A673 (cell line): ENCODE measurements at regions of chr18 and their contacts with region 1.

Region 1: DNA sequence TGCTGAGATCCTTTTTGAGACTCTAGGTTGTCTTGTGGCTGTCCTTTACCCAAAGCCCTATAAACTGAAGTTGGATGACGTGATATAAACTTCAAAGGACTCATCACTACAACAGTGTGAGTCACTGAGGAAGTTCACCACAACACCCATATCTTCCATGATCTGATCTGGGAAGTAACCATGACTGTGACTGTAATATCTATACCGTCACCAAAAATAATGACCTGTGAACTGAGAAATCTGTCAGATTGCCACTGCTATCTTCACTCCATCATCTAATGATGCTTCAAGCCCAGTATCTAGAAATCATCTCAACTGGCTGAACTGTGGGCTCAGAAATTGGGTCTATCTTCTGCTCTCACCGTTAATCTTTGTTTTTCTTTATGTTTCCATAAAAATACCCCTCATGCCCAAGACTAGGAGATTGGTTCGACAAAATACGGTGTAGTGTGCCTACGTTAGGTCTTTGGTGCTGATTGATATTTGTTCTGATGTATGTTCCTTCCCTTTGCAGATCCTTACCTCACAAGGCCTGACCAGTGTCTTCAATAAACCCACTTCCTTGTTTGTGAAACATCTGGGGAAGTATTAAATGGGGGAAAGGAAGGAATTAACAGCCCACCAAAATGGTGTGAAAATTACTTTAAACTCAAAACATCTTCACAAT is 78.2 kb downstream of the MYL12B start:
- DNase-seq: no peak
- H3K4me3 ChIP-seq: no peak overlapping the region
- H3K27ac ChIP-seq: no peak overlapping the region
- H3K4me1 ChIP-seq: peaks cover 7% of the 10 kb centered on the region
- H3K27me3 ChIP-seq: no peaks in the 10 kb centered on the region
- CTCF ChIP-seq: no peak

Region 2: DNA sequence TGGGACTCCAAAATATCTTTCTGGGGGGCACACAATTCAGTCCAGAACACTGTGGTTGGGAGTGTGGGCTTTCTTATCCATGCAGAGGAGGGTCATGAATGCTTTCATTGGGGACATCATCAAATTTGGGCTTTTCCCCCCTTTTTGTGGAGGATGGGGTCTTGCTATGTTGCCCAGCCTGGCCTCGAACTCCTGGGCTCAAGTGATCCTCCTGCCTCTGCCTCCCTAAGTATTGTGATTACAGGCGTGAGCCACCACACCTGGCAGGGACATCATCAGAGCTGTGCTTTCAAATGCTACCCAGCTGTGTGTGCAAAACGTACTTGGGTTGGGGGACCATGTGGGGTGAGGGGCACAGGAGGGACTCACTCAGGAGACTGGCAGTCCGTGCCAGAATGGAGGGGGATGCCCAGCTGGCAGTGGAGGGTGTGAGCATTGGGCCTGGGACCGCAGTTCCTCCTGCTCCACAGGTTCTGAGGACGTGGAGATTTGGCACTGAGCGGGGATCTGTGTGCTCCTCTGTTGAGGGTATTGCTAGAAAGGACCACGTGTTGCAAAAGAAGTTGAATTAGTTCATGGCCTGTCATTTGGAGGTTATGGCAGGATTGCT is 468.9 kb before region 1 on chr18:
- CTCF ChIA-PET with region 1: no interaction called
- POLR2A ChIA-PET with region 1: no interaction called
- intact Hi-C with region 1: no loop called
- DNase-seq: no peak
- H3K4me3 ChIP-seq: no peak overlapping the region
- H3K27ac ChIP-seq: no peak overlapping the region
- H3K4me1 ChIP-seq: no peaks in the 10 kb centered on the region
- H3K27me3 ChIP-seq: no peaks in the 10 kb centered on the region
- CTCF ChIP-seq: no peak

Region 3: GRCh38 chr18:3230401-3231334 is 109.5 kb before region 1 on chr18:
- CTCF ChIA-PET with region 1: no interaction called
- POLR2A ChIA-PET with region 1: no interaction called
- intact Hi-C with region 1: no loop called
- DNase-seq: peak; percentile 84
- H3K4me3 ChIP-seq: no peak overlapping the region
- H3K27ac ChIP-seq: no peak overlapping the region
- H3K4me1 ChIP-seq: peaks cover 5% of the 10 kb centered on the region
- H3K27me3 ChIP-seq: no peaks in the 10 kb centered on the region
- CTCF ChIP-seq: no peak

Region 4: DNA sequence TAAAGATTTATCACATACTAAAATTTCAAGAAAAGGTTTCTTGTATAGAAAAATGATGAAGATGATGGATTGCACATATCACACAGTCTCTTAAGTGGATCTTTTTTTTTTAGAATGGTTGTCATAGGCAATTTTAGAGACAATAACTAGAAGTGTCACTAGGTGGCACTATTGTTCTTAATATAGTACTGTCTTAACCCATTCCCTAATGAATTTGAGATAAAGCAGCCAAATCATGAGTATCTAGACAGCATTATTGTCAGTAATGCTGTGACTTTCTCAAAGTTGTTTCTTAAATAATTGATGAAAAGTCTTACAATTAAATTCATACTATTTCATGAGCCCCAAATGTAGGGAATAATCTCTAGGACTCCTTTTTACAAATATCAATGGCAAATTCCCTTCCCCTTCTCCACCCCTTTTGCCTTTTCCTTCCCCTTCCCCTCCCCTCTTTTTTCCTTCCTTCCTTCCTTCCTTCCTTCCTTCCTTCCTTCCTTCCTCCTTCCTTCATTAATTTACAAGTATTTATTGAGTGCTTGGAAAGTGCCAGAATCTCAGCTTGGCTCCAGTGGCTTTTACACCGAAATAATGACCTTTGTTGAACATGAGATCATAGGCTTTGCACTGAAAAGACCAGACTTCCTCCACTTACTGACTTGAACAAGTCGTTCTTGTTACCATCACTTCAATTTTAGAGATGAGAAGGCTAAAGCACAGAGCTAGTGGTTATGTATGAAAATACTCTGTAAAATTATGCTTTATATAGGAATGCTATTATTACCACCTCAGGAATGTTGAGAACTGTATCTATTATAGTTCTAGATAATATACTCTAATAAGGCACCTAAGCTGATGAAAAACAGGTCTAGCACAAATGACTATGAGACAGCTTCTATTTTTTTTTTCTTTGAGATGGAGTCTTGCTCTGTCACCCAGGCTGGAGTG is 58.4 kb before region 1 on chr18:
- CTCF ChIA-PET with region 1: no interaction called
- POLR2A ChIA-PET with region 1: no interaction called
- intact Hi-C with region 1: no loop called
- DNase-seq: peak; percentile 95
- H3K4me3 ChIP-seq: no peak overlapping the region
- H3K27ac ChIP-seq: peak overlapping the region; percentile 96
- H3K4me1 ChIP-seq: peaks cover 58% of the 10 kb centered on the region
- H3K27me3 ChIP-seq: no peaks in the 10 kb centered on the region
- CTCF ChIP-seq: peak; percentile 68

Region 5: GRCh38 chr18:3350566-3351527 is 10.7 kb after region 1 on chr18:
- CTCF ChIA-PET with region 1: no interaction called
- POLR2A ChIA-PET with region 1: interaction called, 23 read pairs
- intact Hi-C with region 1: no loop called
- DNase-seq: no peak
- H3K4me3 ChIP-seq: no peak overlapping the region
- H3K27ac ChIP-seq: no peak overlapping the region
- H3K4me1 ChIP-seq: no peaks in the 10 kb centered on the region
- H3K27me3 ChIP-seq: no peaks in the 10 kb centered on the region
- CTCF ChIP-seq: no peak